Caco-2 (cell line): ENCODE measurements at regions of chr9 and their contacts with region 1.

Region 1: DNA sequence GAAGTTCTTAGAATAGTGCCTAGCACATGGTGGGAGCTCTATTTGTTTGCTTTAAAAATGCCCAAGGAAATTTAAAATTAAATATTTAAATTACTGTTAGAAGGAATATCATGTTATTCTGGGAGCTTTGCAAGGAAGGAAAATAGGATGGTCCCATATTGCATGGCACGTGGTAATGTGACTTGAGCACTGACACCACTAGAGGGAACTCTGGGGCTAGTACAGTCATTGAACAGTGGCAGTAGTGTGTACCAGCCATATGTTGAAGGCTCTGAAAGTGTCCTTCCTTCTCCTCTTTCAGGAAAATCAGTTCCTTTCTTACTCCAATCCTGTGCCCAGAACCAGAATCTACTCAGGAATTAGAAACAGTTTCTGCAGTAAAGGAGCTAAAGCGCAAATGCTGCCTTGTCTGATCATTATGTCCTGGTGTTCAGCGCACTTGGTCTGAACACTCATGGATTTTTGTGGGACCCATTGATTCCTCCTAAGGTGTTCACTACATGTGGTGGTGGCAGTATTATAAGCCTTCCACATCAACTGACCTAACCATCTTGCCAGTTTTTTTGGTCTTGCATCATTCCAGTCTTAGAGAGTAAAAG is 54.1 kb downstream of the GDA start:
- DNase-seq: peak in 1 of 2 experiments; percentile 11
- H3K4me3 ChIP-seq: no peak overlapping the region
- H3K4me3 Mint-ChIP-seq: no peak overlapping the region
- H3K27ac Mint-ChIP-seq: no peak overlapping the region
- H3K4me1 ChIP-seq: no peaks in the 10 kb centered on the region
- H3K4me1 Mint-ChIP-seq: peaks cover 12% of the 10 kb centered on the region
- H3K27me3 ChIP-seq: no peaks in the 10 kb centered on the region
- H3K27me3 Mint-ChIP-seq: no peaks in the 10 kb centered on the region
- CTCF ChIP-seq: peak; percentile 27 to 37

Region 2: GRCh38 chr9:72271613-72272478 is 68.5 kb after region 1 on chr9:
- CTCF ChIA-PET with region 1: no interaction called
- POLR2A ChIA-PET with region 1: no interaction called
- intact Hi-C with region 1: loop called (anchors 1 kb)
- DNase-seq: peak in 1 of 2 experiments; percentile 7
- H3K4me3 ChIP-seq: no peak overlapping the region
- H3K4me3 Mint-ChIP-seq: no peak overlapping the region
- H3K27ac Mint-ChIP-seq: no peak overlapping the region
- H3K4me1 ChIP-seq: no peaks in the 10 kb centered on the region
- H3K4me1 Mint-ChIP-seq: no peaks in the 10 kb centered on the region
- H3K27me3 ChIP-seq: no peaks in the 10 kb centered on the region
- H3K27me3 Mint-ChIP-seq: no peaks in the 10 kb centered on the region
- CTCF ChIP-seq: peak in 1 of 2 experiments; percentile 43